CD4-positive, alpha-beta T cell (primary cell): ENCODE measurements at regions of chr1 and their contacts with region 1.

Region 1: DNA sequence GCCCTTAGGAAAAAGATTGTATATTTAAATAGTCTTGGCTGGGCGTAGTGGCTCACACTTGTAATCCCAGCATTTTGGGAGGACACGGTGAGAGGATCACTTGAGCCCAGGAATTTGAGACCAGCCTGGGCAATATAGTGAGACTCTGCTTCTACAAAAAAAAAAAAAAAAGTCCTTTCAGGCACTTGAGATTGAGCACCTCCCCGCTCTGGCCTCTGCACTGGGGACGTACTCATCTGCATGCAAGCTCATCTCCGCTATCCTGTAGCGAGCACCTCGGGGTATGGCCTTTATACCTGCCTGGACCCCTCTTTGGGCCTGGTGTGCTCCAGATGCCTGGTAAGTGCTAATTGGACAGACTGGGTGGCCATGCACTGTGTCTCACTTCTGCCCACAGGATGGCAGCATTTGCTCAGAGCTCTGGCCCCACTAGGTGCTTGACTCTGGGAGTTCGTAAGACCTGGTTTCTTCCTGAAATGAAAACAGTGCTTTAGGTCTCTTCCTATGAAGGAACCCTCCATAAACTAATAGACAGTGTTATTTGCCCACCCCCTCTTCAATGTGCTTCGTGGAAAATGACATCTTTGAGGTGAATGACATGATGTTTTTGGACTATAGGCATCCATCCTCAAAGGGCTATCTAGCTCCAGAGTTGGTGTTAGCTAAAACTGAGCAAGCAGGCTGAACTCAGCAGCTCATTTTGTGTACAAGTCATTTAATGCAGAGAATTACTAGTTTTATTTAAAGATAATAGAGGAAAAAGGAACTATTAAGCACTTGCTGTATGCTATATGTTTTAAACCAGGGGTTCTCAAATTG is 61.7 kb upstream of the ADAR start:
- DNase-seq: peak; percentile 61 to 88 (median 70)
- ATAC-seq: peak; percentile 100
- H3K4me3 ChIP-seq: no peak overlapping the region
- H3K4me3 Mint-ChIP-seq: no peak overlapping the region
- H3K27ac ChIP-seq: no peak overlapping the region
- H3K27ac Mint-ChIP-seq: no peak overlapping the region
- H3K4me1 ChIP-seq: no peaks in the 10 kb centered on the region
- H3K4me1 Mint-ChIP-seq: peaks cover 5% of the 10 kb centered on the region
- H3K27me3 ChIP-seq: no peaks in the 10 kb centered on the region
- H3K27me3 Mint-ChIP-seq: no peaks in the 10 kb centered on the region
- CTCF ChIP-seq: peak; percentile 83

Region 2: DNA sequence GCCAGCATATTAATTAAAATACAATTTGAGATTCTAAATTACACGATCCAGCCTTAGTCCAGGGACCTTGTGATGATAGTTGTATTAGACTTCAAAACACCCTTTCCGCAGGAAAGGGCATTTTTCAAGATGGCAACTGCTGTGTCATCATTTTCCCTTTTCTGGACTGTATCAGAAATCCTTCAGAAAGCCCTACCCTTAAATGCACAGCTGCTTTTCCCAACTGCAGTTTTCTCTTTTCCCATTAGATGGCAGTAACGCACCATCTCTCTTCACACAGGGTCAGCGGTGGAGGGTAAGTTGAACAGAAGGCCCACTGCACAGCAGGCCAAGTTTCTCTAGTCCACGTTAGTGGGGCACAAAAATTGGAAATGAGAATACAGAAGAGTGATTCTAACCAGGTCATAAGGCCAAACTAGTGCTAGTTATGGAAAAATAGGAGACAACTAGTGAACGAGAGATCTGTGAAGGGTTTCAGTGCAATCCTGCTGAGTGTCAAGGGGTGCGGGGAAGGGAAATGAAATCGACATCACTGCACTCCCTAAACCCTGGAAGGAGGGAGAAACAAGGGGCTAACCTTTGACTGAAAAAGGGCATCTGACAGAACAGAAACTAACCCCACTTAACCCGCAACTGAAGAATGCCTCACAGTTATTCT is 189.8 kb before region 1 on chr1:
- CTCF ChIA-PET with region 1: interaction called, 3 read pairs
- POLR2A ChIA-PET with region 1: no interaction called
- intact Hi-C with region 1: loop called in 1 of 2 experiments (anchors 10 kb)
- DNase-seq: peak in 13 of 14 experiments; percentile 23 to 84 (median 43)
- ATAC-seq: peak; percentile 91
- H3K4me3 ChIP-seq: no peak overlapping the region
- H3K4me3 Mint-ChIP-seq: no peak overlapping the region
- H3K27ac ChIP-seq: no peak overlapping the region
- H3K27ac Mint-ChIP-seq: no peak overlapping the region
- H3K4me1 ChIP-seq: peaks cover 7% of the 10 kb centered on the region
- H3K4me1 Mint-ChIP-seq: peaks cover 20% of the 10 kb centered on the region
- H3K27me3 ChIP-seq: no peaks in the 10 kb centered on the region
- H3K27me3 Mint-ChIP-seq: no peaks in the 10 kb centered on the region
- CTCF ChIP-seq: peak; percentile 90

Region 3: GRCh38 chr1:154627257-154628120 is 42.2 kb before region 1 on chr1:
- CTCF ChIA-PET with region 1: no interaction called
- POLR2A ChIA-PET with region 1: no interaction called
- intact Hi-C with region 1: no loop called
- DNase-seq: peak; percentile 79 to 94 (median 91)
- ATAC-seq: peak; percentile 70
- H3K4me3 ChIP-seq: peak overlapping the region; percentile 94
- H3K4me3 Mint-ChIP-seq: peak overlapping the region; percentile 95
- H3K27ac ChIP-seq: peak overlapping the region; percentile 91 to 98
- H3K27ac Mint-ChIP-seq: peak overlapping the region; percentile 99
- H3K4me1 ChIP-seq: peaks cover 22% of the 10 kb centered on the region
- H3K4me1 Mint-ChIP-seq: peaks cover 45% of the 10 kb centered on the region
- H3K27me3 ChIP-seq: no peaks in the 10 kb centered on the region
- H3K27me3 Mint-ChIP-seq: peaks cover 7% of the 10 kb centered on the region
- CTCF ChIP-seq: no peak

Region 4: GRCh38 chr1:154760469-154760933 is 90.8 kb after region 1 on chr1:
- CTCF ChIA-PET with region 1: interaction called, 11 read pairs
- POLR2A ChIA-PET with region 1: interaction called, 3 read pairs
- intact Hi-C with region 1: loop called (anchors 1 kb)
- DNase-seq: peak; percentile 70 to 92 (median 83)
- ATAC-seq: peak; percentile 88
- H3K4me3 ChIP-seq: peak overlapping the region; percentile 44
- H3K4me3 Mint-ChIP-seq: no peak overlapping the region
- H3K27ac ChIP-seq: no peak overlapping the region
- H3K27ac Mint-ChIP-seq: no peak overlapping the region
- H3K4me1 ChIP-seq: peaks cover 21% of the 10 kb centered on the region
- H3K4me1 Mint-ChIP-seq: peaks cover 42% of the 10 kb centered on the region
- H3K27me3 ChIP-seq: no peaks in the 10 kb centered on the region
- H3K27me3 Mint-ChIP-seq: no peaks in the 10 kb centered on the region
- CTCF ChIP-seq: peak; percentile 92

Region 5: GRCh38 chr1:154819628-154820590 is 150.2 kb after region 1 on chr1:
- CTCF ChIA-PET with region 1: interaction called, 12 read pairs
- POLR2A ChIA-PET with region 1: no interaction called
- intact Hi-C with region 1: no loop called
- DNase-seq: peak in 7 of 14 experiments; percentile 7 to 42 (median 35)
- ATAC-seq: peak; percentile 73
- H3K4me3 ChIP-seq: no peak overlapping the region
- H3K4me3 Mint-ChIP-seq: no peak overlapping the region
- H3K27ac ChIP-seq: no peak overlapping the region
- H3K27ac Mint-ChIP-seq: no peak overlapping the region
- H3K4me1 ChIP-seq: no peaks in the 10 kb centered on the region
- H3K4me1 Mint-ChIP-seq: no peaks in the 10 kb centered on the region
- H3K27me3 ChIP-seq: no peaks in the 10 kb centered on the region
- H3K27me3 Mint-ChIP-seq: no peaks in the 10 kb centered on the region
- CTCF ChIP-seq: peak; percentile 26

Region 6: DNA sequence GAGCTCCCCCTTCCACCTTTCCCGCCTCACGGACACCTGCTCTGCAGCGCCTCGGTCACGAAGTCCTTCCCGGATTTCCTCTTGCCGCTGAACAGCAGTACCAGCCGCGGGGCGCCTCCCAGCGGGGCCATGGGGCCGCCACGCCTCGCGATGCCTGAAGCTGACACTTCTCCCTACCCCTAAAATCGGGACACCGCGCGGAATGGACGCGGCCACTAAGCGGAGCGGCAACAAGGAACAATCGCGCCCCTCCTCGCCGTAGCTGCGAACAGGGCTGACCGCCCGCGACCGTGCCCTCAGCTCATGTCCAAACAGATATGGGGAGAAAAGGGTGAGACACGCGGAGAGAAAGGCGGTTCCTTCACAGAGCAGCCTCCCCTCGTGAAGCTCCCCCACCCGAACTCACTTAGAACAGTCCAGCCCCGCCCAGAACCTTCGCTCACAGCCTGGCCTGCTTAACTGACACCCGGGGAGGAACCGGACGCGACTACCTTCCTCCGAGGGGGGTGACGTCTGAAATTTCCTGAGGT is 266.9 kb after region 1 on chr1 and contains the start of gene PMVK:
- CTCF ChIA-PET with region 1: interaction called, 9 read pairs
- POLR2A ChIA-PET with region 1: no interaction called
- intact Hi-C with region 1: loop called in 1 of 2 experiments (anchors 2 kb)
- DNase-seq: peak; percentile 90 to 98 (median 94)
- ATAC-seq: peak; percentile 79
- H3K4me3 ChIP-seq: peak within 1 kb of the TSS; percentile 86
- H3K4me3 Mint-ChIP-seq: peak within 1 kb of the TSS; percentile 90
- H3K27ac ChIP-seq: peak within 1 kb of the TSS; percentile 98 to 100
- H3K27ac Mint-ChIP-seq: peak within 1 kb of the TSS; percentile 98
- H3K4me1 ChIP-seq: peaks cover 58% of the 10 kb centered on the region
- H3K4me1 Mint-ChIP-seq: peaks cover 59% of the 10 kb centered on the region
- H3K27me3 ChIP-seq: no peaks in the 10 kb centered on the region
- H3K27me3 Mint-ChIP-seq: no peaks in the 10 kb centered on the region
- CTCF ChIP-seq: peak; percentile 51
- total RNA-seq, gene PMVK: 6.6 to 7.4 TPM

Region 7: GRCh38 chr1:155063550-155064110 is 394.0 kb after region 1 on chr1 and contains the start of gene EFNA4:
- CTCF ChIA-PET with region 1: interaction called, 3 read pairs
- POLR2A ChIA-PET with region 1: no interaction called
- intact Hi-C with region 1: loop called (anchors 1 kb)
- DNase-seq: peak; percentile 69 to 92 (median 80)
- ATAC-seq: peak; percentile 90
- H3K4me3 ChIP-seq: peak within 1 kb of the TSS; percentile 76
- H3K4me3 Mint-ChIP-seq: peak within 1 kb of the TSS; percentile 96
- H3K27ac ChIP-seq: peak within 1 kb of the TSS in 1 of 2 donors; percentile 61
- H3K27ac Mint-ChIP-seq: peak within 1 kb of the TSS; percentile 70
- H3K4me1 ChIP-seq: peaks cover 41% of the 10 kb centered on the region
- H3K4me1 Mint-ChIP-seq: peaks cover 32% of the 10 kb centered on the region
- H3K27me3 ChIP-seq: no peaks in the 10 kb centered on the region
- H3K27me3 Mint-ChIP-seq: no peaks in the 10 kb centered on the region
- CTCF ChIP-seq: no peak
- total RNA-seq, gene EFNA4: 2.4 to 3.3 TPM